ENCODE measurements at regions of chr15 and their contacts with region 1.

Region 1: GRCh38 chr15:25933456-25934158 is 70.5 kb upstream of the ATP10A start:
- DNase-seq: peak; percentile 42 to 81 (median 64)
- ATAC-seq: peak; percentile 96 to 99 (median 97)
- H3K4me3 ChIP-seq: peak overlapping the region; percentile 42 to 76
- H3K4me3 Mint-ChIP-seq: peak overlapping the region; percentile 81 to 87 (median 81)
- H3K27ac ChIP-seq: no peak overlapping the region
- H3K27ac Mint-ChIP-seq: peak overlapping the region; percentile 13 to 81
- H3K4me1 ChIP-seq: peaks cover 2 to 10% of the 10 kb centered on the region in 2 experiments
- H3K4me1 Mint-ChIP-seq: peaks cover 8 to 9% (median 8%) of the 10 kb centered on the region in 3 donors
- H3K27me3 ChIP-seq: peaks cover 0 to 12% of the 10 kb centered on the region in 2 experiments
- H3K27me3 Mint-ChIP-seq: peaks cover 0 to 5% of the 10 kb centered on the region in 2 donors

Region 2: GRCh38 chr15:25775317-25775912 is 158.2 kb before region 1 on chr15:
- CTCF ChIA-PET with region 1: interaction called in 1 of 2 experiments, 13 read pairs
- POLR2A ChIA-PET with region 1: interaction called in 1 of 2 experiments, 4 read pairs
- DNase-seq: no peak
- ATAC-seq: no peak
- H3K4me3 ChIP-seq: no peak overlapping the region
- H3K4me3 Mint-ChIP-seq: no peak overlapping the region
- H3K27ac ChIP-seq: no peak overlapping the region
- H3K27ac Mint-ChIP-seq: peak overlapping the region in 1 of 2 donors; percentile 62
- H3K4me1 ChIP-seq: peaks cover 8% of the 10 kb centered on the region in 2 experiments
- H3K4me1 Mint-ChIP-seq: peaks cover 23 to 34% (median 25%) of the 10 kb centered on the region in 3 donors
- H3K27me3 ChIP-seq: no peaks in the 10 kb centered on the region
- H3K27me3 Mint-ChIP-seq: no peaks in the 10 kb centered on the region

Region 3: GRCh38 chr15:25783607-25784540 is 149.7 kb before region 1 on chr15:
- CTCF ChIA-PET with region 1: interaction called, 13 to 19 read pairs
- POLR2A ChIA-PET with region 1: interaction called in 1 of 2 experiments, 4 read pairs
- DNase-seq: peak in 30 of 35 experiments; percentile 21 to 63 (median 44)
- ATAC-seq: peak in 3 of 4 experiments; percentile 20 to 51 (median 43)
- H3K4me3 ChIP-seq: no peak overlapping the region
- H3K4me3 Mint-ChIP-seq: no peak overlapping the region
- H3K27ac ChIP-seq: no peak overlapping the region
- H3K27ac Mint-ChIP-seq: peak overlapping the region; percentile 55 to 61
- H3K4me1 ChIP-seq: peaks cover 4 to 18% of the 10 kb centered on the region in 2 experiments
- H3K4me1 Mint-ChIP-seq: peaks cover 43 to 45% (median 43%) of the 10 kb centered on the region in 3 donors
- H3K27me3 ChIP-seq: no peaks in the 10 kb centered on the region
- H3K27me3 Mint-ChIP-seq: no peaks in the 10 kb centered on the region

Region 4: DNA sequence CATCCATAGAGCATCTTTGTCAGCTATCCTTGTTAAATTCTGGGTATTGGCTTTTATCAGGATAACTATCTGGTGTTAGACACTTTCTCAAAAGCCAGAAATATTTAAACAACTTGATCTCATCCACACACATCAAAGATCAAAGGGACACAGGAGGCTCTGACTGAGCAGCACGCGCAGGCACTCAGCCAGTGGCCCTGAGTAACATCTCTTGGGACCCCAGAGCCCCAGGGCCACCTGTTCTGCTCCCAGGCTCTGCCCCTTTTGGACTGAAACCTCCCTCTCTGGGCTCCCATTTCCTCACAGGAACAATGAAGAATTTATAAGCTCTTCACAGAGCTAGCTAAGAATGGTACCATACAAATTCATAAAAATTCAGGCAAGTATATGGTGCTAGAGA is 86.6 kb before region 1 on chr15:
- CTCF ChIA-PET with region 1: interaction called, 4 to 11 read pairs
- POLR2A ChIA-PET with region 1: interaction called in 1 of 2 experiments, 6 read pairs
- DNase-seq: peak in 3 of 35 experiments; percentile 21 to 36 (median 32)
- ATAC-seq: peak in 1 of 4 experiments; percentile 14
- H3K4me3 ChIP-seq: peak overlapping the region in 1 of 2 donors; percentile 1
- H3K4me3 Mint-ChIP-seq: peak overlapping the region; percentile 28 to 71 (median 29)
- H3K27ac ChIP-seq: peak overlapping the region; percentile 65
- H3K27ac Mint-ChIP-seq: peak overlapping the region; percentile 91 to 98
- H3K4me1 ChIP-seq: peaks cover 58 to 76% of the 10 kb centered on the region in 2 experiments
- H3K4me1 Mint-ChIP-seq: peaks cover 86 to 89% (median 89%) of the 10 kb centered on the region in 3 donors
- H3K27me3 ChIP-seq: no peaks in the 10 kb centered on the region
- H3K27me3 Mint-ChIP-seq: no peaks in the 10 kb centered on the region

Region 5: GRCh38 chr15:25905140-25905539 is 28.5 kb before region 1 on chr15:
- CTCF ChIA-PET with region 1: interaction called in 1 of 2 experiments, 11 read pairs
- POLR2A ChIA-PET with region 1: no interaction called
- DNase-seq: no peak
- ATAC-seq: no peak
- H3K4me3 ChIP-seq: no peak overlapping the region
- H3K4me3 Mint-ChIP-seq: no peak overlapping the region
- H3K27ac ChIP-seq: no peak overlapping the region
- H3K27ac Mint-ChIP-seq: no peak overlapping the region
- H3K4me1 ChIP-seq: peaks cover 0 to 13% of the 10 kb centered on the region in 2 experiments
- H3K4me1 Mint-ChIP-seq: peaks cover 10 to 17% (median 13%) of the 10 kb centered on the region in 3 donors
- H3K27me3 ChIP-seq: peaks cover 0 to 4% of the 10 kb centered on the region in 2 experiments
- H3K27me3 Mint-ChIP-seq: peaks cover 0 to 1% of the 10 kb centered on the region in 2 donors

Region 6: DNA sequence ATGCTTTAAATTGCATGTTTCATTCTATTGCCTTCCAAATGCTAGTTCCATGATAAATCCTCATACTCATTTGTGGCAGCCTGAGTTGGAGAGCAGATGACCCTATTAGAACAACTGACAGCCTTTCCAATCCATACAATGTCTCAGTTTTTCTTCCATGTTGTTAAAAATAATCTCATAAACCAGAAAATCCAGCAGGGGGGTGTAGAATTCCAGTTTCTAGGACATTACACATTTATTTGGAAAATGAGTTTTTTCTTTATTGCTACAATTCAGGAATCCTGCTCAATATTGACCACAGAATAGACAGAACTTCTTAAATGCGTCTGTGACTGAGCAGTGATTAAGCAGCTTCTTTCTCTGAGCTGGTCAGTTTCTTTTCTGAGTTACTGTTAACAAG is 103.8 kb after region 1 on chr15:
- CTCF ChIA-PET with region 1: no interaction called
- POLR2A ChIA-PET with region 1: no interaction called
- DNase-seq: no peak
- ATAC-seq: no peak
- H3K4me3 ChIP-seq: no peak overlapping the region
- H3K4me3 Mint-ChIP-seq: no peak overlapping the region
- H3K27ac ChIP-seq: no peak overlapping the region
- H3K27ac Mint-ChIP-seq: no peak overlapping the region
- H3K4me1 ChIP-seq: no peaks in the 10 kb centered on the region
- H3K4me1 Mint-ChIP-seq: no peaks in the 10 kb centered on the region
- H3K27me3 ChIP-seq: peaks cover 2 to 12% of the 10 kb centered on the region in 2 experiments
- H3K27me3 Mint-ChIP-seq: peaks cover 21 to 37% of the 10 kb centered on the region in 2 donors

Measured in T-cell (primary cell).